Caco-2 (cell line): ENCODE measurements at regions of chr3 and their contacts with region 1.

Region 1: GRCh38 chr3:184543843-184544512 is 17.6 kb upstream of the EPHB3 start:
- DNase-seq: peak; percentile 80 to 87
- H3K4me3 ChIP-seq: no peak overlapping the region
- H3K4me3 Mint-ChIP-seq: no peak overlapping the region
- H3K27ac Mint-ChIP-seq: no peak overlapping the region
- H3K4me1 ChIP-seq: no peaks in the 10 kb centered on the region
- H3K4me1 Mint-ChIP-seq: no peaks in the 10 kb centered on the region
- H3K27me3 ChIP-seq: no peaks in the 10 kb centered on the region
- H3K27me3 Mint-ChIP-seq: peaks cover 6% of the 10 kb centered on the region
- CTCF ChIP-seq: peak; percentile 77 to 89

Region 2: GRCh38 chr3:184345317-184346144 is 198.4 kb before region 1 on chr3:
- CTCF ChIA-PET with region 1: no interaction called
- POLR2A ChIA-PET with region 1: no interaction called
- intact Hi-C with region 1: loop called (anchors 1 kb)
- DNase-seq: peak; percentile 65 to 70
- H3K4me3 ChIP-seq: no peak overlapping the region
- H3K4me3 Mint-ChIP-seq: no peak overlapping the region
- H3K27ac Mint-ChIP-seq: peak overlapping the region; percentile 12
- H3K4me1 ChIP-seq: no peaks in the 10 kb centered on the region
- H3K4me1 Mint-ChIP-seq: peaks cover 8% of the 10 kb centered on the region
- H3K27me3 ChIP-seq: no peaks in the 10 kb centered on the region
- H3K27me3 Mint-ChIP-seq: no peaks in the 10 kb centered on the region
- CTCF ChIP-seq: peak; percentile 51 to 74

Region 3: GRCh38 chr3:184469423-184469822 is 74.6 kb before region 1 on chr3:
- CTCF ChIA-PET with region 1: interaction called, 3 read pairs
- POLR2A ChIA-PET with region 1: no interaction called
- intact Hi-C with region 1: loop called (anchors 1 kb)
- DNase-seq: peak; percentile 60 to 63
- H3K4me3 ChIP-seq: no peak overlapping the region
- H3K4me3 Mint-ChIP-seq: no peak overlapping the region
- H3K27ac Mint-ChIP-seq: no peak overlapping the region
- H3K4me1 ChIP-seq: 0 out of 2 replicates have a peak, but pooled peaks cover 6% of the 10 kb centered on the region
- H3K4me1 Mint-ChIP-seq: no peaks in the 10 kb centered on the region
- H3K27me3 ChIP-seq: no peaks in the 10 kb centered on the region
- H3K27me3 Mint-ChIP-seq: peaks cover 5% of the 10 kb centered on the region
- CTCF ChIP-seq: peak; percentile 77 to 78

Region 4: GRCh38 chr3:184513276-184514170 is 30.5 kb before region 1 on chr3:
- CTCF ChIA-PET with region 1: interaction called, 4 read pairs
- POLR2A ChIA-PET with region 1: no interaction called
- intact Hi-C with region 1: loop called (anchors 1 kb)
- DNase-seq: peak; percentile 84 to 90
- H3K4me3 ChIP-seq: peak overlapping the region; percentile 59
- H3K4me3 Mint-ChIP-seq: peak overlapping the region; percentile 33
- H3K27ac Mint-ChIP-seq: no peak overlapping the region
- H3K4me1 ChIP-seq: no peaks in the 10 kb centered on the region
- H3K4me1 Mint-ChIP-seq: no peaks in the 10 kb centered on the region
- H3K27me3 ChIP-seq: no peaks in the 10 kb centered on the region
- H3K27me3 Mint-ChIP-seq: peaks cover 15% of the 10 kb centered on the region
- CTCF ChIP-seq: peak; percentile 87